ENCODE measurements at regions of chrX and their contacts with region 1.

Region 1: DNA sequence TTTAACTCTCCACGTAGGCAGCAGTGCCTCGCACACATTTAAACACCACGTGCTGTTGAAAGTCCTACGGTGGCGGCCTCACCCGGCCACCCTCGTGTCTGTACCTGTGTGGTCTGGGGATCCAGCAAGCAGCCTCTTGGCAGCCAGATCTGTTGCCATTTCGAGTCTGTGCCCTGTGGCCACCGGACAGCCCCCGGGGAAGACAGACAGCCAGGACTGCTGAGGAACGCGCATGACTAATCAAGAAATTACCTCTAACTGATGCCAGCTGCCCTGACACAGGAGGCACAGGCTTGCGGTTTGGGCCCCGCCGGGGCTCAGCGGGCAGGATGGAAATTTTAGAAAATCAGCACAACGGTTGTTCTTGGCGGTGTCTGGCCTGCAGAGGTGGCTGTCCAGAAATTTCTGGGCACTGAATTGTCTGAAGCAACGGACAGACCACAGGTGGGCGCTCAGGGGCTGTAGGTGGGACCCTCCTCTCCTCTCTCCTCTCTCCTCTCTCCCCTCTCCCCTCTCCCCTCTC is 15.6 kb upstream of the ASMTL start:
- DNase-seq: no peak
- ATAC-seq: peak; percentile 52
- H3K4me3 ChIP-seq: no peak overlapping the region
- H3K27ac ChIP-seq: no peak overlapping the region
- H3K4me1 ChIP-seq: no peaks in the 10 kb centered on the region
- H3K27me3 ChIP-seq: no peaks in the 10 kb centered on the region
- CTCF ChIP-seq: peak; percentile 32; the same call in 1 of the 2 replicates
- EP300 ChIP-seq: no peak
- POLR2A ChIP-seq: no peak
- RAD21 ChIP-seq: no peak

Region 2: GRCh38 chrX:1453951-1454785 is 14.1 kb before region 1 on chrX:
- CTCF ChIA-PET with region 1: no interaction called
- POLR2A ChIA-PET with region 1: no interaction called
- in situ Hi-C with region 1: no loop called
- intact Hi-C with region 1: no loop called
- DNase-seq: peak; percentile 70
- ATAC-seq: peak; percentile 78
- H3K4me3 ChIP-seq: peak overlapping the region; percentile 74 to 84 (median 79); a peak in 3 of 6 replicates
- H3K27ac ChIP-seq: no peak overlapping the region
- H3K4me1 ChIP-seq: peaks cover 12% of the 10 kb centered on the region
- H3K27me3 ChIP-seq: peaks cover 1 to 9% of the 10 kb centered on the region in 2 experiments; a peak in 3 of 5 replicates
- CTCF ChIP-seq: peak; percentile 94
- EP300 ChIP-seq: no peak
- POLR2A ChIP-seq: no peak
- RAD21 ChIP-seq: peak; percentile 94

Region 3: GRCh38 chrX:1580735-1581531 is 112.6 kb after region 1 on chrX:
- CTCF ChIA-PET with region 1: no interaction called
- POLR2A ChIA-PET with region 1: no interaction called
- in situ Hi-C with region 1: loop called (anchors 5 kb)
- intact Hi-C with region 1: no loop called
- DNase-seq: peak; percentile 52
- ATAC-seq: peak; percentile 80
- H3K4me3 ChIP-seq: no peak overlapping the region
- H3K27ac ChIP-seq: no peak overlapping the region
- H3K4me1 ChIP-seq: peaks cover 8% of the 10 kb centered on the region
- H3K27me3 ChIP-seq: no peaks in the 10 kb centered on the region
- CTCF ChIP-seq: peak; percentile 75
- EP300 ChIP-seq: no peak
- POLR2A ChIP-seq: no peak
- RAD21 ChIP-seq: peak; percentile 58; the same call in 1 of the 2 replicates